ENCODE measurements at regions of chr15 and their contacts with region 1.

Region 1: GRCh38 chr15:81388436-81388770 is 14.4 kb upstream of the TMC3 start:
- H3K4me3 ChIP-seq: no peak overlapping the region
- H3K27ac ChIP-seq: no peak overlapping the region
- H3K4me1 ChIP-seq: no peaks in the 10 kb centered on the region
- CTCF ChIP-seq: no peak

Region 2: GRCh38 chr15:81400640-81401236 is 12.3 kb after region 1 on chr15:
- CTCF ChIA-PET with region 1: interaction called, 16 read pairs
- POLR2A ChIA-PET with region 1: no interaction called
- H3K4me3 ChIP-seq: no peak overlapping the region
- H3K27ac ChIP-seq: no peak overlapping the region
- H3K4me1 ChIP-seq: no peaks in the 10 kb centered on the region
- CTCF ChIP-seq: peak; percentile 48; the same call in 1 of the 2 replicates